ENCODE measurements at regions of chr16 and their contacts with region 1.

Region 1: DNA sequence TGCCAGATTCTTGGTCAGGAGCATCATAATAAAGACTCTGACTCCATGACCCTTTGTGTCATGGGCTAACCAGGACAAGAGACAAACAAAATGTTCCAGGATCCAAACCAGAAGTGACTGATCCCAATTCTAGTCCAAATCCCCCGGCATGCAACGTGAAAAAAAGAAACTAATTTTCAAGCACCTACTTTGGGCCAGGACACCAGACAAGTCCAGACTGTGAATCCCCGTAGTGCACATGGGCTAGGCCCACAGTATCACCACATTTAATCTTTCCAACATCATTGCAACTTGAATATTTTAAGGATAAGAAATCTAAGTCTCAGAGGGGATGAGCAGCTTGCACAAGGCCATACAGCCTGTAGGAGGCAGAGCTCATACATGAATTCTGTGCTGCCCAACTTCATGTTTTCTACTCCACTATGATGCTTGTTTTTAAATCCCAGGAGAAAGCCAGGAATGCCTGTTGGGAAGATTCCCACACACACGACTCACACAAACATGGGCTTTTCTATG is 365.7 kb downstream of the NPIPA8 start:
- DNase-seq: no peak
- ATAC-seq: no peak
- H3K4me3 ChIP-seq: no peak overlapping the region
- H3K27ac ChIP-seq: no peak overlapping the region
- H3K4me1 ChIP-seq: no peaks in the 10 kb centered on the region
- H3K27me3 ChIP-seq: peaks cover 34% of the 10 kb centered on the region; the same call in 1 of the 2 replicates
- CTCF ChIP-seq: peak in 2 of 3 experiments; percentile 20 to 36; a peak in 2 of 6 replicates
- POLR2A ChIP-seq: no peak
- RAD21 ChIP-seq: 0 out of 2 replicates have a peak, but pooled peaks have one; percentile 16

Region 2: DNA sequence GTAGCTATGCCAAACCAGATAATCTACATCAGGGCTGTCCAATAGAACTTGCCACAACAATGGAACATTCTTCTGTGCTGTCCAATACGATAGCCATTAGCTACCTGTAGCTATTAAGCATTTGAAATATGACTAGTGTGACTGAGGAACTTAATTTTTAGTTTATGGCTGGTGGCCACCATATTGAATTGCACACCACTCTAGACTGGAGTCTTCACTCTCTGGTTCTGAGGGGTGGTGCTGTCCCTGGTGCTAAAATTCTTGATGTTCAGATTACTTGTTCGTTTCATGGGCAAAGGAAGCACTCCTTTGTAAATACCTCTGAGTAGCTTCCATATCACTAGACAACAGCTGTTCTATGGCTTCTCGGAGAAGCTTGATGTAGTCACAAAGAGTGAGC is 69.1 kb after region 1 on chr16:
- CTCF ChIA-PET with region 1: no interaction called
- POLR2A ChIA-PET with region 1: no interaction called
- RAD21 ChIA-PET with region 1: no interaction called
- intact Hi-C with region 1: loop called (anchors 10 kb)
- DNase-seq: no peak
- ATAC-seq: no peak
- H3K4me3 ChIP-seq: no peak overlapping the region
- H3K27ac ChIP-seq: no peak overlapping the region
- H3K4me1 ChIP-seq: no peaks in the 10 kb centered on the region
- H3K27me3 ChIP-seq: peaks cover 16% of the 10 kb centered on the region
- CTCF ChIP-seq: no peak
- POLR2A ChIP-seq: no peak
- RAD21 ChIP-seq: no peak

Measured in HCT116 (cell line).